ENCODE measurements at regions of chr5 and their contacts with region 1.

Region 1: DNA sequence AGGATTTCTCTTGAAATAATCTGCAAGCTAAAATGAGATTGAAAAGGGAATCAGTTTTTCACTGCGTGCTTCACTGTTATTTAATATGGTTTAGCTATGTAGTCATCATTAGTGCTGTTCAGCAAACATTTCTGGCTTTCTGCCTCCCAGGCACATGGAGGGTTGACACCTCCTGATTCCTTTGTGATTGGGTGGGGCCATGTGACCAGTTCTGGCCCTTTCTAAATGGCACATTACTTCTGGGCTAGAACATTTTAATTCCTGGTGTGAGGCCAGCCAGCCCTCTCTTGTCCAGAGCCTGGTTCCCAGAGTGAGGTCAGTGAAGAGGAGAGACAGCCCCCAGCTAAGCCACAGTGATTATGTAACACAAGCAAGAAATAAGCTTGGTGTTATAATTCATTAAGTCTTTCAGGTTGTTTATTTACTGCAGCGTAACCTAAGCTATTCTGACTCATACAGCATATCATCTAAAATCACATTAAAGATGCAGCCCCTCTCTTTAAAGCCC is 17.4 kb upstream of the ARSI start:
- DNase-seq: peak; percentile 98
- H3K4me3 Mint-ChIP-seq: no peak overlapping the region
- H3K27ac Mint-ChIP-seq: peak overlapping the region; percentile 80
- H3K4me1 Mint-ChIP-seq: peaks cover 49% of the 10 kb centered on the region
- H3K27me3 Mint-ChIP-seq: no peaks in the 10 kb centered on the region
- CTCF ChIP-seq: no peak

Region 2: GRCh38 chr5:149990518-149991376 is 329.4 kb before region 1 on chr5:
- CTCF ChIA-PET with region 1: no interaction called
- POLR2A ChIA-PET with region 1: no interaction called
- intact Hi-C with region 1: no loop called
- DNase-seq: peak; percentile 91
- H3K4me3 Mint-ChIP-seq: no peak overlapping the region
- H3K27ac Mint-ChIP-seq: no peak overlapping the region
- H3K4me1 Mint-ChIP-seq: peaks cover 10% of the 10 kb centered on the region
- H3K27me3 Mint-ChIP-seq: no peaks in the 10 kb centered on the region
- CTCF ChIP-seq: peak; percentile 96

Region 3: DNA sequence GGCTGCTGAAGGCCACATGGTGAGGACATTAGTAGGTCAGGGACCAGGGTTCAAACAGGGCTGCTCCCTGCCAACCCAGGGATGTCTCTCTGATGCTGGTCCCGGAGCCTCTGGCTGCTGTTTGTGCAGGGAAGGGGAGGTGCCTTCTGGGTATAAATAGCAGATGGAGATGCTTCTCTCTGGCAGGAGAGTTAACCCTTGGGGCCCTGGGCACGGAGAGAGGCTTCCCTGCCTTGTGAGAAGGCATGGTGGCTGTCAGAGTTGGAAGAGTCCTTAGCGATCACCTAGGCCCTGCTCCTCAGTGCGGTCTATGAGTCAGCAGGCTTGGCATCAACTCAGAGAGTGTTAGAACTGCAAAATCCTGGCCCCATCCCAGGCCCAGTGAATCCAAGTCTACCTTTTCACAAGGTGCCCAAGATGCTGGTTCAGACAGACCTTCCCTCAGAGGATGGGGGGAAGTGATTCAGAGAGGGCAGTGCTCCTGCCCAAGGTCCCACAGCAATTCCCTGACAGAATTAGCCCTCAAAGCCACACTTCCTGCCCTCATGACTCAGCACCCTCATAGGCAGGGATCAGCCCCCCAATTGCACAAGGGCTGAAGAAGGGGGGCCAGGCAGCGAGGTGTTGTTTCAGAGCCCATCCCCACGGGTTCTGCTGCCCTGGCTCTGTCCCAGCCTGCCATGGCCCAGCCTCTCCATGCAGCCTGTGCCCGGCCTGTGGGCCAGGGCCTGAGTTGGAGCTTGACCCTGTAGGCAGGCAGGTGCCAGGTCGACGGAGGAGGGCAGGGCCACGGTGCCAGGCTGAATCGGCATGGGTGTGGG is 56.1 kb before region 1 on chr5:
- CTCF ChIA-PET with region 1: interaction called, 3 read pairs
- POLR2A ChIA-PET with region 1: interaction called, 15 read pairs
- intact Hi-C with region 1: loop called (anchors 1 kb)
- DNase-seq: peak; percentile 100
- H3K4me3 Mint-ChIP-seq: no peak overlapping the region
- H3K27ac Mint-ChIP-seq: peak overlapping the region; percentile 13
- H3K4me1 Mint-ChIP-seq: peaks cover 11% of the 10 kb centered on the region
- H3K27me3 Mint-ChIP-seq: no peaks in the 10 kb centered on the region
- CTCF ChIP-seq: no peak

Region 4: GRCh38 chr5:150281987-150282386 is 38.1 kb before region 1 on chr5:
- CTCF ChIA-PET with region 1: no interaction called
- POLR2A ChIA-PET with region 1: no interaction called
- intact Hi-C with region 1: no loop called
- DNase-seq: no peak
- H3K4me3 Mint-ChIP-seq: no peak overlapping the region
- H3K27ac Mint-ChIP-seq: no peak overlapping the region
- H3K4me1 Mint-ChIP-seq: peaks cover 6% of the 10 kb centered on the region
- H3K27me3 Mint-ChIP-seq: peaks cover 16% of the 10 kb centered on the region
- CTCF ChIP-seq: no peak

Region 5: GRCh38 chr5:150295172-150295634 is 24.9 kb before region 1 on chr5:
- CTCF ChIA-PET with region 1: interaction called, 24 read pairs
- POLR2A ChIA-PET with region 1: interaction called, 61 read pairs
- intact Hi-C with region 1: loop called (anchors 1 kb)
- DNase-seq: peak; percentile 88
- H3K4me3 Mint-ChIP-seq: no peak overlapping the region
- H3K27ac Mint-ChIP-seq: peak overlapping the region; percentile 82
- H3K4me1 Mint-ChIP-seq: peaks cover 36% of the 10 kb centered on the region
- H3K27me3 Mint-ChIP-seq: no peaks in the 10 kb centered on the region
- CTCF ChIP-seq: no peak

Region 6: GRCh38 chr5:150302301-150303069 is 17.6 kb before region 1 on chr5 and contains the start of gene ARSI:
- CTCF ChIA-PET with region 1: interaction called, 24 read pairs
- POLR2A ChIA-PET with region 1: interaction called, 61 read pairs
- intact Hi-C with region 1: loop called (anchors 1 kb)
- DNase-seq: peak; percentile 49
- H3K4me3 Mint-ChIP-seq: no peak within 1 kb of the TSS
- H3K27ac Mint-ChIP-seq: no peak within 1 kb of the TSS
- H3K4me1 Mint-ChIP-seq: peaks cover 38% of the 10 kb centered on the region
- H3K27me3 Mint-ChIP-seq: no peaks in the 10 kb centered on the region
- CTCF ChIP-seq: no peak
- total RNA-seq, gene ARSI: 0.19 and 0.25 TPM in 2 replicates

Region 7: GRCh38 chr5:150329881-150330876 is 10.1 kb after region 1 on chr5:
- CTCF ChIA-PET with region 1: interaction called, 13 read pairs
- POLR2A ChIA-PET with region 1: interaction called, 7 read pairs
- intact Hi-C with region 1: no loop called
- DNase-seq: no peak
- H3K4me3 Mint-ChIP-seq: no peak overlapping the region
- H3K27ac Mint-ChIP-seq: no peak overlapping the region
- H3K4me1 Mint-ChIP-seq: no peaks in the 10 kb centered on the region
- H3K27me3 Mint-ChIP-seq: no peaks in the 10 kb centered on the region
- CTCF ChIP-seq: no peak

Region 8: DNA sequence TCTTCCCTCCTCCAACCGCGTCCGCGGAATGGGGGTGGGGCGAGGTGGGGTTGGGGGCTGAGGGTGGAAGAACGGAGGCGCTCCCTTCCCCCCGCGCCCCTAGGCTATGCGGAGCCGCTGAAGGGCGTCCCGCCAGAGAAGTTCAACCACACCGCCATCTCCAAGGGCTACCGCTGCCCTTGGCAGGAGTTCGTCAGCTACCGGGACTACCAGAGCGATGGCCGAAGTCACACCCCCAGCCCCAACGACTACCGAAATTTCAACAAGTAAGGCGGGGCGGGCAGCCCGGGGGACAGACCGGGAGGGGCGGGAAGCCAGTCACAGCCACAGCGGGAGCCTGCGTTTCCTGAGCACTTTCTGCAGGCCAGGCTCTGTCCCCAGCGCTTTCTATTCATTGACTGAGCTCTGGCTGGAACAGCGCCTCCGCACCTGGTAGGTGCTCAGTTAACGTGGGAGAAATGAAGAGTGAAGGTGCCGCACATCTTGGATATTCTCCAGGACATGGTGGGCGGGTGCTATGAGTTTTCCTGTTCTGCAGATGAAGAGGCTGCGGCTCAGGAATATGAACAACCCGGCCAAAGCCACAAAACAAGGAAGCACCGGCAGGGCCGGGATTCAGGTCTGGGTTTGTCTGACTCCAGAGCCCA is 352.3 kb after region 1 on chr5:
- CTCF ChIA-PET with region 1: no interaction called
- POLR2A ChIA-PET with region 1: no interaction called
- intact Hi-C with region 1: no loop called
- DNase-seq: peak; percentile 65
- H3K4me3 Mint-ChIP-seq: peak overlapping the region; percentile 51
- H3K27ac Mint-ChIP-seq: no peak overlapping the region
- H3K4me1 Mint-ChIP-seq: peaks cover 14% of the 10 kb centered on the region
- H3K27me3 Mint-ChIP-seq: no peaks in the 10 kb centered on the region
- CTCF ChIP-seq: no peak